ENCODE measurements at regions of chr2 and their contacts with region 1.

Region 1: DNA sequence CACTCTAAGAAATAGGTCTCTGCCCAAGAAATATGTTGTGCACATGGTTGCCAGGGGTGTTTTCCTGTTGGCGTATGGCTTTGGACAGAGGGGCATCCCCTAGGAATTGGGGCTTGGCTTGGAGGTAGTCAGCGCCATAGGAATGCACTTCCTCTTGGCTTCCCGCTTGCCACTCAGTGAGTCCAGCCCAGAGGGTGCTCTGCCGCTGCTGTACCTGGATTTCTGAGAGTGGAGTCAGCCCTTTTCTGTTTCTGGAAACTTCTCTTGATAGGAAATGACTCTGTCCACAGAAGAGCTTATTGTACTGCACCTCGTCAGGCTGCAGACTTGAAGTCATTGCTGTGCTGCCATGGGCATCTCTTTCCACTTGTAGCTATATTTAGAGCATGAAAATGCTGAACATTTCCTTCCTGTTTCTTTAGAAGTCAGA is 116.7 kb upstream of the MGAT5 start:
- DNase-seq: peak; percentile 83

Region 2: DNA sequence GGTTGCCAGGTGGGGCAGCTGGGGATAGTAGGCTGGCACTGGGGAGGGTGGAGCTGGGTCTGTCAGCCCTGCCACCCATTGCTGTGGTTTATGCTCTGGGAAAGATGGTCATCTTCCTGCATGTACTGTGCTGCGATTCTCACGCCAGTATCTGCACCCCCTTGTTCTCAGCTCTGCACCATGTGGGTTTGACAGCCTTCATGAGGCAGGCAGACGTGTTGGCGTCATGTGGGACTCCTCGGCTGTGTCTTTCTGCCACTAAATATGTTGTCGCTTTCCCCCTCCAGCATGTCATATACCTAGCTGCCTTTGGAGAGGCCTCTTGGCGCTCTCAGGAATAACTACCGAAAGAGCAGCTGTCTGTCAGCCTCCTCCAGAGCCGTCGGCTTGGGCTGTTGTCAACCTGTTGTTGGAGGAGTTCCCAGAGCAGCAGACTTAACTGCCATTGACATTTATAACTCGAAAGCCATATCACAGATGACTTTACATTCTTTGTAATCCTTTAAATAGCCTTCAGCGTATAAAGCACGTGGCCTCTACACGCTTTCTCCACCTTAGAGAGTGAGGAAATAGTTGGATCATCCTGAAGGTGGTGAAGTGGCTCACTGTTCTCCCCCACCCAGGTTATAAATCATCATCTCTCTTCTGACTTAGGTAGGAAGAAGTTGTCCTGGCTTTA is 36.3 kb after region 1 on chr2:
- intact Hi-C with region 1: loop called (anchors 1 kb)
- DNase-seq: no peak

Region 3: GRCh38 chr2:134202371-134202770 is 65.2 kb after region 1 on chr2:
- intact Hi-C with region 1: loop called (anchors 5 kb)
- DNase-seq: no peak

Measured in cardiac septum (tissue), 1 donor.